ENCODE measurements at regions of chr7 and their contacts with region 1.

Region 1: GRCh38 chr7:137791930-137792329 is 54.8 kb downstream of the DGKI start:
- DNase-seq: no peak
- H3K4me3 ChIP-seq: no peak overlapping the region
- H3K27ac ChIP-seq: no peak overlapping the region
- H3K4me1 ChIP-seq: no peaks in the 10 kb centered on the region
- H3K27me3 ChIP-seq: peaks cover 3 to 10% of the 10 kb centered on the region in 2 experiments
- CTCF ChIP-seq: no peak
- POLR2A ChIP-seq: no peak

Region 2: DNA sequence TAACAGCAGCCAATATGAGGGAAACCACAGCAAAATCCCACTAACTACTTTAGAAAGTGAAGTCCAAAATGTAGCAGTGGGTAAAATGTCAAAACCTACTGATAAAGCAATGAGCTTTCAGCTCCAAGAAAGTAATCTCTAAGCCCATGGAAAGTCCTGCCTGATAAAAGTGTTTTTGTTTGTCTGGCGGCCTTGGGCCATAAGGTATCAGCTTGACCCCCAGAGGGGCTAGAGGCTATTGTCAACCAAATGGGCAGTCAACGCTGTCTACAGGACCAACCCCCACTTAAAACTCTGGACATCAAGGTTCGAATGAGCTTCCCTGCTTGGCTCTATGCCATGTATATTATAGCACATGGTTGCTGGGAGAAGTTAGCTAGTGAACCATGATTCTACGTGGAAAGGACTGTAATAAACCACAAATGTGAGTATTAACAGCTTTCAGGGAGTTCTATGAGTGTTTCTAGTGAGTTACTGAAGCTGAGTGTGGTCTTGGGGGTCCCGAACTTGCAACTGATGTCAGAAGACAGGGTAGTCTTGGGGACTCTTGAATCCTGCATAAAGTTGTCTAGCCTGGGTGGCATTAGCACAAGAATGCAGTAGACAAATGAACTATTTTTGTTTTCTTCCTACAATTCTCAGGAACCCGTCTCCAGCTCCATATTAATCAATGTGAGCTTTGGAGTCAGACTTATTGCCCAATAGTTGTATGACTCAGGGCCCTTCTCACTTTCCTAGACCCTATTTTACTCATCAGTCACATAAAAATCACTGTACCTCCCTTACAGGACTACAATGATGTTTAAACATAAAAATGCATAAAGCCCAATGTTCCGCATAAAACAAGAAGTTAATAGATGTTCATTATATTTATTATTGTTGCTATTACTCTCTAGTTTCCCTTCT is 110.0 kb before region 1 on chr7:
- CTCF ChIA-PET with region 1: no interaction called
- POLR2A ChIA-PET with region 1: no interaction called
- dilution Hi-C with region 1: no loop called
- intact Hi-C with region 1: loop called (anchors 5 kb)
- DNase-seq: no peak
- H3K4me3 ChIP-seq: no peak overlapping the region
- H3K27ac ChIP-seq: no peak overlapping the region
- H3K4me1 ChIP-seq: no peaks in the 10 kb centered on the region
- H3K27me3 ChIP-seq: no peaks in the 10 kb centered on the region
- CTCF ChIP-seq: no peak
- POLR2A ChIP-seq: no peak

Region 3: GRCh38 chr7:137760111-137760510 is 31.8 kb before region 1 on chr7:
- CTCF ChIA-PET with region 1: no interaction called
- POLR2A ChIA-PET with region 1: no interaction called
- dilution Hi-C with region 1: no loop called
- intact Hi-C with region 1: no loop called
- DNase-seq: no peak
- H3K4me3 ChIP-seq: no peak overlapping the region
- H3K27ac ChIP-seq: no peak overlapping the region
- H3K4me1 ChIP-seq: no peaks in the 10 kb centered on the region
- H3K27me3 ChIP-seq: peaks cover 0 to 1% of the 10 kb centered on the region in 2 experiments
- CTCF ChIP-seq: no peak
- POLR2A ChIP-seq: no peak

Region 4: DNA sequence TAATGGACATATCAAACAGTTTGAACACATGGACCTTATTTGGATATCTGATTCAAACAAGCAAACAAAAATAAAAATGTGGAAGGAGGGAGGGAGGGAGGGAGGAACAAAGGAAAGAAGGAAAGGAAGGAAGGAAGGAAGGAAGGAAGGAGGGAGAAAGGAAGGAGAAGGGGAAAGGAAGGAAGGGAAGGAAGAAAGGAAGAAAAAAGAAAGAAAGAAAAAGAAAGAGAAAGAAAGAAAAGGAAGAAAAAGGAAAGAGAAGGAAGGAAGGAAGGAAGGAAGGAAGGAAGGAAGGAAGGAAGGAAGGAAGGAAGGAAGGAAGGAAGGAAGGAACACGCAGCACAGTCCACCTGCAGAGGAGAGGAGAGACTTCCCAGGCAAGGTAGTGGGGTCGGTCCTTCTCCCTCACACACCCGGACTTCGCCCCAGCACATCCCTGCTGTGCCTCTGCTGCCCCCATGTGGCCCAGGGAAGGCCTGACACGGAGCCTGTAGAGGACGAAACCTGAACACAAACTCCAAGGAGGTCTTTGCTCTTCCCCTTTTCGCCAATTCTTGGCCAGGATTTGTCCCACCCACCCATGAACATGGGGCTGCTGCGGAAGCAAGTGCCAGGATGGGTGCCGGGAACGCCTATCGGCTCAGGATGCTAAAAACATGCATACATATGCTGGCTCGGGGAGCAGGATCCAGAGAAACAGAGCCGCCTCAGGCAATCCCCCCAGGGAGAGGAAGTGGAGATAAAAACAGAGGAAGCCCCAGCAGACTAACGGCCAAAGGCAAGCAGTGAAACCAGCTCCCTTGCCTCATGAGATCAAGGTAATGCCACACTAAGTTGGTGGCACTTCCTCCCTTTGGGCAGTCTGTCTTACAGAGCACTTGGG is 107.2 kb after region 1 on chr7:
- CTCF ChIA-PET with region 1: no interaction called
- POLR2A ChIA-PET with region 1: no interaction called
- dilution Hi-C with region 1: no loop called
- intact Hi-C with region 1: loop called (anchors 1 kb)
- DNase-seq: peak; percentile 73
- H3K4me3 ChIP-seq: no peak overlapping the region
- H3K27ac ChIP-seq: no peak overlapping the region
- H3K4me1 ChIP-seq: peaks cover 2% of the 10 kb centered on the region
- H3K27me3 ChIP-seq: no peaks in the 10 kb centered on the region
- CTCF ChIP-seq: peak; percentile 91 to 98
- POLR2A ChIP-seq: no peak

Region 5: GRCh38 chr7:138276891-138277290 is 485.0 kb after region 1 on chr7:
- CTCF ChIA-PET with region 1: no interaction called
- POLR2A ChIA-PET with region 1: no interaction called
- dilution Hi-C with region 1: no loop called
- intact Hi-C with region 1: no loop called
- DNase-seq: no peak
- H3K4me3 ChIP-seq: no peak overlapping the region
- H3K27ac ChIP-seq: no peak overlapping the region
- H3K4me1 ChIP-seq: no peaks in the 10 kb centered on the region
- H3K27me3 ChIP-seq: no peaks in the 10 kb centered on the region
- CTCF ChIP-seq: no peak
- POLR2A ChIP-seq: no peak

Measured in endothelial cell of umbilical vein (primary cell).